ENCODE measurements at regions of chr3 and their contacts with region 1.

Region 1: GRCh38 chr3:32420126-32421038 is 28.7 kb downstream of the CMTM7 start:
- DNase-seq: peak; percentile 89
- ATAC-seq: peak; percentile 95
- H3K4me3 ChIP-seq: peak overlapping the region; percentile 35 to 65 (median 43); a peak in 5 of 6 replicates
- H3K27ac ChIP-seq: peak overlapping the region; percentile 81
- H3K4me1 ChIP-seq: peaks cover 47% of the 10 kb centered on the region
- H3K27me3 ChIP-seq: no peaks in the 10 kb centered on the region
- CTCF ChIP-seq: peak; percentile 37
- EP300 ChIP-seq: no peak
- POLR2A ChIP-seq: peak in 1 of 2 experiments; percentile 43; a peak in 1 of 4 replicates
- RAD21 ChIP-seq: no peak

Region 2: DNA sequence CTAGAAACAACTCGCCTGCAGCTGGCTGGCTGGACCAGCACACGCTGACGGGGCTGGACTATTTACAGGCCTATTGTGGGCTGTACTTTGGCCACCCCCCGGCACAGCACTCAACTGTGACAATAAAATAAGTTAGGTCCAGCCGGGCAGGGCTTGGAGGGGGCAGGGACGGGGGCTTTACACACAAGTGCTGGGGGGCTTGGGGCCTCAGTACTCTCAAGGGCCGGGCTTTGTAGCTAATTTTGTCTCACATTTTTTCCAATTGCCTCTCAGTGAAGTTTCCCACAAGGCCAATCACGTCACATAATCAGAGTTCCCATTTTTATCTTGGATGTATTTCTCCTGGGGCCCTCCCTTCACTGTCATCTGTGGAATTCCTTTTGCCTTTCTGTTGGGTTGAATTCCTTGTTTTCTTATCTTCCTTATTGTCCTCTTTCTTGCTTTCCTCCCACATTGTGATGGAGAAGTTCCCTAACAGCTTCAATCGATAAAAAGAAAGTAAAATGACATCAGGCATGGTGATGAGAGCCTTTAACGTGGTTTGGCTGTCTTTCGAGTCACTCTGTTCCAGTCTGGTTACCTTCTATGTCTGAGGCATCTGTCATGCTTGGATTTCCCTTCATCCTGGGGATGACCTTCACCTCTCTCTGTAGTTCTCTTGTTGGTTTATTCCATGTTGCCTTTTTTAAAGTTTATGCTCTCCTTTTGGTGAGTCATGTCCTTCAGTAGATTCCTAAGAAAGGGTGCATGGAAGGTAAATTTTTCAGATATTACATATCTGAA is 72.8 kb before region 1 on chr3:
- CTCF ChIA-PET with region 1: no interaction called
- POLR2A ChIA-PET with region 1: no interaction called
- in situ Hi-C with region 1: no loop called
- intact Hi-C with region 1: loop called (anchors 2 kb)
- DNase-seq: no peak
- ATAC-seq: peak; percentile 91
- H3K4me3 ChIP-seq: peak overlapping the region in 2 of 3 experiments; percentile 26 to 50; a peak in 5 of 6 replicates
- H3K27ac ChIP-seq: peak overlapping the region; percentile 27
- H3K4me1 ChIP-seq: peaks cover 40% of the 10 kb centered on the region
- H3K27me3 ChIP-seq: no peaks in the 10 kb centered on the region
- CTCF ChIP-seq: no peak
- EP300 ChIP-seq: no peak
- POLR2A ChIP-seq: no peak
- RAD21 ChIP-seq: no peak